GM13976 (cell line): ENCODE measurements at regions of chr16 and their contacts with region 1.

Region 1: DNA sequence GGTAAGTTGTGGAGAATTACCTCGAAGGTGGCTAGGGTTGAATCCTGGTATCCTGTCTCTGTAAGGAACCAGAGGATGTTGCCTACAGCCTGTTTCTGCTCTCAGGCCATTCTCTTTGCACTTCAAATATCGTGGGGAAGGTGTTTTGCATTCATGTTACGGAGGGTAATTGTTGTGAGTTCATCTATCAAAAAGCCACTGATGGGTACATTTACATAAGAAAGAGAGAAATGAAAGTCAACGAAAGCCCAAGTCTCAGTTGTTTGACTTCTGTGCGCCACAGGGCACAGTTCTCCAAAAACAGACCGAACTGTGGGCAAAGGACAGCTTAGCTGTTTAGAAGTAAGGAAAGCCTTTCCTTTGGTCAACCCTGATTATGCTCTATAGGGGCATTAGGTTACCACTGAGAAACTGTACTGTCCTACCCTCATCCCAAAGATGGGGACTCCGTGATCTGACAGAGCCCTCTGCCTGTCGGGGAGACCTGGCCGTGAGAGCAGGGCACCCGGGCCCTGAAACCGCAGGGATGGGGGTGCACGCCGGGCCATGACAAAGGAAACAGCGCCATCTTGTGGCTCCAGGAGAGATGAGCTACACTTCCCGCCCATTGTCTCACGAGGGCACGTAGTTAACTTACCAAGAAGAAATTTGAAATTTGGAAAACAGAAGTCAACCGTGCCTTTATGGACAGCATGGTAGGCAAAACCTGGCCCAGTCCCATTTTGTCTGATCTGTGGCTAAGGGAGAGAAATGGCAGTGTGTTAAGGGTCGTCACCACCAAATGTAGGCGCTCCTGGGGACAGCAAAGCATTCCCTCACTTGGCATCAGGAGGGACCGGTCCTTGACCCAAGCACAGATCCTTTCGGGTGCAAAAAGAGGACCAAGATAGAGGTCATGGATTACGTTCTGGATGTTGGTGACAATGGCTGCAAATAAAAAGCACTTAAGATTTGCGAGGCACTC is 74.5 kb upstream of the DYNLRB2 start:
- DNase-seq: peak; percentile 71
- CTCF ChIP-seq: peak; percentile 80

Region 2: GRCh38 chr16:79601931-79602627 is 864.2 kb before region 1 on chr16:
- in situ Hi-C with region 1: loop called (anchors 25 kb)
- DNase-seq: peak; percentile 63
- CTCF ChIP-seq: peak; percentile 54

Region 3: DNA sequence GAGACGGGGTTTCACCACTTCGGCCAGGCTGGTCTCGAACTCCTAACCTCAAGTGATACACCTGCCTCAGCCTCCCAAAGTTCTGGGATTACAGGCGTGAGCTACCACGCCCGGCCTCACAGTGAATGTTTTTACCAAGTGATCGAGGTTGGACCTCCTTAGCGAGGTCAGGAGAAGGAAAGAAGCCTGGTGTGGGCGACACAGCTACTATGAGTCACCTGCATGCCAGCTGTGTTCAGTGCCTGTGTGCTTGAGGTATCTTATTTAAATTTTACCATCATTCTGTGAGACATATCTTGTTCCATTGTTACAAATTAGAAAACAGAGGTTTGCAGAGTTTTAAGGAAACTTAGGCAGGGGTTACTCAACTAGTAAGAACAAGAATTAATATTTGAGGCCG is 100.3 kb before region 1 on chr16:
- in situ Hi-C with region 1: no loop called
- DNase-seq: no peak
- CTCF ChIP-seq: no peak

Region 4: DNA sequence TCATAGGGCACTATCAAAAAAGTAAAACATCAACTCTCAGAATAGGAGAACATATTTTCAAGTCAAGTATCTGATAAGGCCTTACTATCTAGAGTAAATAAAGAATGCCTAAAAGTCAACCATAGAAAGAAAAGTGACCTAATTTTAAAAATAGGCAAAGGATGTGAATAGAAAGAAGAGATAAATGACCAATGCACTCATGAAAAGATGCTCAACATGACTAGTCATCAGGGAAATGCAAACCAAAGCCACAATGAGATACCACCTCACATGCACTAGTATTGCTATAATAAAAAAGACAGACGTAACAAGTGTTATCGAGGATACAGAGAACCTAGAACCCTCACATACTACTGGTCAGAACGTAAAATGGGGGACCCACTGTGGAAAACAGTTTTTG is 165.3 kb after region 1 on chr16:
- in situ Hi-C with region 1: no loop called
- DNase-seq: no peak
- CTCF ChIP-seq: no peak